CD4-positive, alpha-beta T cell (primary cell): ENCODE measurements at regions of chrX and their contacts with region 1.

Region 1: GRCh38 chrX:120468825-120469525 is at the start of gene LAMP2:
- DNase-seq: peak; percentile 61 to 90 (median 75)
- ATAC-seq: peak; percentile 96
- H3K4me3 ChIP-seq: peak within 1 kb of the TSS; percentile 82
- H3K4me3 Mint-ChIP-seq: peak within 1 kb of the TSS; percentile 93
- H3K27ac ChIP-seq: peak within 1 kb of the TSS; percentile 59 to 60
- H3K27ac Mint-ChIP-seq: peak within 1 kb of the TSS; percentile 88
- H3K4me1 ChIP-seq: peaks cover 20% of the 10 kb centered on the region
- H3K4me1 Mint-ChIP-seq: peaks cover 39% of the 10 kb centered on the region
- H3K27me3 ChIP-seq: no peaks in the 10 kb centered on the region
- H3K27me3 Mint-ChIP-seq: no peaks in the 10 kb centered on the region
- CTCF ChIP-seq: no peak
- total RNA-seq, gene LAMP2: 13.4 to 15.4 TPM

Region 2: DNA sequence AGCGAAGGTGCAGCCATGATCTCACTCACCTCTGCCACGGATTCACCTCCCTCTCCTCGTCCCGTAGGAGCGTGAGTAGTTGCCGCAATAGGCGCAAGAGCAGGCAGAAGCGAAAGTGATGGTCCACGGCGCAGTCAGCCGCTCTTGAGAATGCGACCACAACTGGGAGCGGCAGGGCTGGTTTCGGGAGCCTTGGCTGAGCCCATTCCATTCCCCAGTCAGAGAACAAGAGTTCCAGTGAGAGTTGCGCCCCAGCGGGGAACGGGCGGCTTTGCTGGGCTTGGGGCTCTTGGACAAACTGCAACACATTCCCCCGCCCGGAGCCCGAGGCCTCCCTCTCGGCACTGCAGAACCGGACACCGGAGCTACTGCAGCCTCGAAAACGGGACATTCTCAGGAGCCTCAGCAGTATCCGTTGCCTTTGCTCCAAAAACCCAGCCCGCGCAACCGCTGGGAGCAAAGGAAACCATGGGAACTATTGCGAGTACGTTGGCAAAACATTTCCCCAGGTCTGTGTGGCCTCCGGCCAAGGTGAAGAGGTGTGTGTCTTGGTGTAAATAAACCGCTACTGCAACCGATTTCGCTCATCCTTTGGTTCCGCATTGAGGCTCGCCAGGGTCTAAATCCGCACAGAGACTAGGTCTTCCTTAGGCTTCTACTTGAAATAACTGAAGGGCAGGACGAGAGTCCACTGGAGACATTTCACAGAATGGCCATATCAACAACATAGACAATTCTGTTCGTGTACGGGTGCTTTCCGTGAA is 224.1 kb before region 1 on chrX:
- CTCF ChIA-PET with region 1: no interaction called
- POLR2A ChIA-PET with region 1: no interaction called
- intact Hi-C with region 1: loop called in 1 of 2 experiments (anchors 5 kb)
- DNase-seq: peak; percentile 34 to 80 (median 48)
- ATAC-seq: peak; percentile 83
- H3K4me3 ChIP-seq: peak overlapping the region; percentile 90
- H3K4me3 Mint-ChIP-seq: peak overlapping the region; percentile 98
- H3K27ac ChIP-seq: peak overlapping the region; percentile 14 to 66
- H3K27ac Mint-ChIP-seq: peak overlapping the region; percentile 84
- H3K4me1 ChIP-seq: peaks cover 3% of the 10 kb centered on the region
- H3K4me1 Mint-ChIP-seq: peaks cover 26% of the 10 kb centered on the region
- H3K27me3 ChIP-seq: no peaks in the 10 kb centered on the region
- H3K27me3 Mint-ChIP-seq: no peaks in the 10 kb centered on the region
- CTCF ChIP-seq: no peak

Region 3: GRCh38 chrX:121169099-121170035 is 700.4 kb after region 1 on chrX:
- CTCF ChIA-PET with region 1: no interaction called
- POLR2A ChIA-PET with region 1: no interaction called
- intact Hi-C with region 1: no loop called
- DNase-seq: no peak
- ATAC-seq: no peak
- H3K4me3 ChIP-seq: no peak overlapping the region
- H3K4me3 Mint-ChIP-seq: no peak overlapping the region
- H3K27ac ChIP-seq: no peak overlapping the region
- H3K27ac Mint-ChIP-seq: no peak overlapping the region
- H3K4me1 ChIP-seq: no peaks in the 10 kb centered on the region
- H3K4me1 Mint-ChIP-seq: no peaks in the 10 kb centered on the region
- H3K27me3 ChIP-seq: no peaks in the 10 kb centered on the region
- H3K27me3 Mint-ChIP-seq: no peaks in the 10 kb centered on the region
- CTCF ChIP-seq: no peak